HEK293 (cell line): ENCODE measurements at regions of chr12 and their contacts with region 1.

Region 1: GRCh38 chr12:3202734-3203446 is 125.7 kb downstream of the TSPAN9 start:
- H3K4me3 ChIP-seq: no peak overlapping the region
- H3K27ac ChIP-seq: no peak overlapping the region
- H3K4me1 ChIP-seq: no peaks in the 10 kb centered on the region; the same call in 1 of the 2 replicates
- CTCF ChIP-seq: peak; percentile 81

Region 2: DNA sequence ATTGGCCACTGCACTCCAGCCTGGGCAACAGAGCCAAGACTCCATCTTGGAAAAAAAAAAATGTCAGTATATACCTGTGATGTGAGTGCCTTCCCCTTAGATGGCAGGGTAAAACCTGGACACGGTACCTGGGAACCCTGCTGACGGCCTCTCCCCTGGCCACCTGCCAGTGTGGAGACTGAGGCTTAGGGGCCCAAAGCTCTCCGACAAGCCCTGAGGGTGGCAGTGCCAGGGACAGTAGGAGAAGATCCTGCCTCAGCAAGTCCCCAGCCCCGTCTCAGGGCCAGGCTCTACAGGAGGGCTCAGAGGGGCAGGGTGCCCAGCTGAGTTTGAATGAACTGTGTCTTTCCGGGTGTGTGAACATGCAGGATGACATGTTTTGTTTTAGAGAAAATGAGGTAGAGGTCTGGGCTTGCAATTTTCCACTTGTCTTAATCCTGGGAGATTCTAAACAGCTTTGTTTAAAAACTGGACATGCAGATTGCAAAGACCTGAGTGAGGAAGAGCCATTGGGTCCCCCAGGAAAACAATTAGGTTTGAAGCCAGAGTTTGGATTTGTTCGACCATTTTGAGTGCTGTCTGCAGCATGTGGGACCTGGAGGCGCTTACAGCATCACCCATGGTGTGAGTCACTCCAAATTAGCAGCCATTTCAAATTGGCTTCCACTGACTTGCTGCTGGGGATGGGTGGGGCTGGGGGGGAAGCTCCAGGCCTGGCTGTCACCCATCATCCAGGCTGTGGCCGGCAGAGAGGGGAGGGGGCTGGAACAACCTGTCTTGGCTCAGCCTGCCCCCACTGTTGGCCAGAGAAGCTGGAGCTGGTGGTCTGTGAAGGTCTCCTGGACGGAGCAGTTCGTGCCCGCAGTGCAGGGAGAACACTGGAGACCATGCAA is 114.9 kb before region 1 on chr12:
- CTCF ChIA-PET with region 1: no interaction called
- POLR2A ChIA-PET with region 1: no interaction called
- H3K4me3 ChIP-seq: no peak overlapping the region
- H3K27ac ChIP-seq: no peak overlapping the region
- H3K4me1 ChIP-seq: no peaks in the 10 kb centered on the region
- CTCF ChIP-seq: no peak

Region 3: GRCh38 chr12:3135522-3136461 is 67.1 kb before region 1 on chr12:
- CTCF ChIA-PET with region 1: interaction called, 22 read pairs
- POLR2A ChIA-PET with region 1: no interaction called
- H3K4me3 ChIP-seq: no peak overlapping the region
- H3K27ac ChIP-seq: no peak overlapping the region
- H3K4me1 ChIP-seq: no peaks in the 10 kb centered on the region
- CTCF ChIP-seq: peak; percentile 75

Region 4: DNA sequence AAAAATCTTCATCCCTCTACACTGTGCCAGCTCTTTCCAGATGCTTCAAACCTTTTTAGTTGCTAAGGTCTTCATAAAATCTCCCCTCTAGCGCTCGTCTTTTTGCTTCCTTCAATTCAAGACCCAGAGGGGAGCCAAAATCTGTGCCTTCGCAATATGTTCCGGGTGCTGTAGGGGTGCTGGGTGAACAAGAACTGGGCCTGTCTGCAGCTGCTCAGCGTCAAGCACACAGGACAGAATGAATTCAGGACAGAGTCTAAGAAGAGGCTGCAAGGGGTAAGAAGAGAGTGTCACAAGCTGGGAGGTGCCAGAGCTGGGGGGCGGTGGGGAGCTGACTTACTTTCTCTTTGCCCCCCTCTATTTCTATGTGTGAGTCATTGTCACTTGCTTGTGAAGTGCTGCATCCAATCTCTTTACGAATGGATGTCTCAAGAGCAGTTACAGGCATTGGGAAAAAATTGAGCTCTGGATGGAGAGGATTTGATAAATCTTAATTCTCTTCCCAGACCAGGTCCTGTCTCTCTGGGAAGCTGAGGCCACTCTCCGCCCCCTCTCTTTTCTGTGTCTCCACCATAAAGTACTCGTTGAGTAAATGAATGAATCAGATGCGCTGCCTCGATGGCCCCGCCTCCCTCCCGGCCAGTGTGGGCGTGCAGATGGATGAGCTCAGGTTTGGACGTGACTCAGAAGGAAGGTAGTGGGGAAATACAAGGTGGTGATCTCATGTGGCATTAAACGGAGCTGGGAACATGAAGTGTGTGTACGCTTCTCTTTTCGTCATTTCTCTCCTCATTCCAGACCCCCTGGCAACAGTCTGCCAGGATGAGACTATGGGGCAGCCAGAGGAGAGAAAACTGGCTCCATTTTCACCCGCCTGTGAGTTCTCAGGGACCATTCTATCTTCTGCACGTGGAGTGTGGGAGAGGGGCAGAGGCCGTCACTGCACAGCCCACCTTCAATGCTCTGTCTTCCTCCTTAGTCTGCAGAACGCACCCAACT is 34.4 kb before region 1 on chr12:
- CTCF ChIA-PET with region 1: interaction called, 30 read pairs
- POLR2A ChIA-PET with region 1: no interaction called
- H3K4me3 ChIP-seq: no peak overlapping the region
- H3K27ac ChIP-seq: no peak overlapping the region; the same call in 1 of the 2 replicates
- H3K4me1 ChIP-seq: peaks cover 23% of the 10 kb centered on the region
- CTCF ChIP-seq: no peak

Region 5: DNA sequence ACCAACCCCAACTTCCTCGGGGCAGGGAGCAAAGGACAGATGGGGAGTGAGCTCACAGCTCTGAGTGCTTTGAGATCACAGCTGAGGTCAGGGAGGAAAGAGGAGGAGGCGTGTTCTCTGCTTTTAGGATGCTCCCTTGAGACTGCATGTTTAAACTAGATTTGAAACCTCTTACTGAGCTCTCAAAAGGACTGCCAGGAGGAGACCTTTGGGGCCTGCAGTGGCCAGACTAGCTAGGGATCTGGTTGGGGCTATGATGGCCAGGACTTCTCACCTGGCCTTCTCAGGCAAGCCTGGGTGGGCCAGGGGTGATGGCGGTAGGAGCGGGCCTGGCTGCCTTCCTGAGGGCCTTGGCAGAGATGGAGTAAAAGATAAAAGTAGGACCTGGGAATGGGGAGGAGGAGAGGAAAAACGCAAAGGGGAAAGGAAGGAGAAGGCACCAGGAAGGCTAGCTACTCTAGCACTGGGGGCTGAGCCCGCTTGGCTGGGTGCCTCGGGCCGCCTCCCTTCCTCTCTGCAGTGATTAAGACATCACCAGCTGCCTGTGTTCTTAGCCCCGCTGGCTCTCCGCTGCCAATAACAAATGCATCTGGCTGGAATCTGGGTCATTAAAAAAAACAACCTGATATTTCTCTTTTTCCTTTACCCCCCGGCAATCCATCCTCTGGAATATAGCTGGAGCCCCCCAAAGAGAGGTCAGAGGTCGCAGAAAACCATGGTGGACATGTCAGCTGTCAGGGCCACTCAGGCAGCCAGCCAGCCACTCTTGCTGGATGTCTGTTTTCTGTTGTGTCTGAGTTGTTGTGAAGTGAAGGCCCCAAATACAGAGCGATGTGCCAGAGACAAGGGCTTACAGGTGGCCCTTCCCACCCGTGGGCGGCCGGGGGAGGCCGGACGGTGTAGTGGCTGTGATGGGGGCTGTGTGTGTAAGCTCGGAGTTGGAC is 15.6 kb after region 1 on chr12:
- CTCF ChIA-PET with region 1: interaction called, 36 read pairs
- POLR2A ChIA-PET with region 1: no interaction called
- H3K4me3 ChIP-seq: no peak overlapping the region
- H3K27ac ChIP-seq: no peak overlapping the region
- H3K4me1 ChIP-seq: peaks cover 6% of the 10 kb centered on the region; the same call in 1 of the 2 replicates
- CTCF ChIP-seq: no peak

Region 6: DNA sequence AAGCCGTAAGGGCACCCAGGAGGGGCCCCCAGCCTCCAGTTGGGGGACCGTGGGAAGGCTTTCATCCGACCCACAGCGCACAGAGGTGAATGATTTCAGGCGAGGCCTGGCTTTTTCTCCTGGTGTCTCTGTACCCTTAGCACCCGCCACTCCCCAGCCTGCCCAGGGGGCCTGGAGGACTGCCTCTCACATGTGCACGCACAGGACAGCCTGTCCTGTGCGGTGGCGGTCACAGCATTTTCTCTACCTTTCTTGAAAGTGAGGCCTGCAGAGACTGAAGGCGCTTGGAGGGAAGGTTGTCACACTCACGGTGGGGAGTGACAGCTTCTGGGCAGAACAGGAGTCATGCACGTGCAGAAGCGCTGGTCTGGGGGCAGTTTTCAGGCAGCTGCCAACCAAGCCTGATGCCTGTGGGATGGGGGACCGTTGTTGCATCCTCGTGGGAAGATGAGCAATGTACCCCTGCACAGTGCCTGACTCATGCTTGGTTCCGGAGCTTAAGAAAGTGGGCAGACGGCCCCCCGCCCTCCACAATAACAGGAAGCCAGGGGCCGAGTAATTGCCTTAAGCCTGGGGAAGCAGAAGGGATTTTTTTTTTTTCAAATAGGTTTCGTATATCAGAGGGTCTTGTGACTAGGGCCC is 22.4 kb after region 1 on chr12:
- CTCF ChIA-PET with region 1: interaction called, 13 read pairs
- POLR2A ChIA-PET with region 1: no interaction called
- H3K4me3 ChIP-seq: no peak overlapping the region
- H3K27ac ChIP-seq: no peak overlapping the region
- H3K4me1 ChIP-seq: no peaks in the 10 kb centered on the region
- CTCF ChIP-seq: no peak

Region 7: DNA sequence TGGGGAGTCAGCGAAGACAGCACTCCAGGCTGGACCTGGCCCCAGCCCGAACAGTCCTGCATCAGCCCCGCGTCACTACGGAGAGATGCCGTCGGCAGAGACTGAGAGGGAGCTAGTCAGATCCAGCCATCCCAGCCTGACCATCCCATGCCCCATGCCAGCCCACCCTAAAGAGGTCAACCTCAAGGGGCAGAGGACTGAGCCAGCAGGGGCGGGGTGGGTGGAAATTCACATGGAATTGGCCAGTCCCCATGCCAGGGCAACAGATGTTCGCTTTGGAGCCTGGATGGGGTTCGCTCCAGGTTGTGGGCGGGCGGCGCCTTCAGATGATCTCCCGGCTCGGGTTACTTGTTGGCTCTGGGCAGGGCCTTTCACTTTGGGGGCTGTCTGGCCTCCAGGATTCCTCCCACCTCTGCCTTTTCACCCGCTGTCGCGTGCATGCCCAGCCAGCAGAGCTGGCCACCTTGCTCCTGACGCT is 28.5 kb after region 1 on chr12:
- CTCF ChIA-PET with region 1: interaction called, 18 read pairs
- POLR2A ChIA-PET with region 1: no interaction called
- H3K4me3 ChIP-seq: no peak overlapping the region
- H3K27ac ChIP-seq: no peak overlapping the region
- H3K4me1 ChIP-seq: 0 out of 2 replicates have a peak, but pooled peaks cover 6% of the 10 kb centered on the region
- CTCF ChIP-seq: no peak